PC-3 (cell line): ENCODE measurements at regions of chr22 and their contacts with region 1.

Region 1: DNA sequence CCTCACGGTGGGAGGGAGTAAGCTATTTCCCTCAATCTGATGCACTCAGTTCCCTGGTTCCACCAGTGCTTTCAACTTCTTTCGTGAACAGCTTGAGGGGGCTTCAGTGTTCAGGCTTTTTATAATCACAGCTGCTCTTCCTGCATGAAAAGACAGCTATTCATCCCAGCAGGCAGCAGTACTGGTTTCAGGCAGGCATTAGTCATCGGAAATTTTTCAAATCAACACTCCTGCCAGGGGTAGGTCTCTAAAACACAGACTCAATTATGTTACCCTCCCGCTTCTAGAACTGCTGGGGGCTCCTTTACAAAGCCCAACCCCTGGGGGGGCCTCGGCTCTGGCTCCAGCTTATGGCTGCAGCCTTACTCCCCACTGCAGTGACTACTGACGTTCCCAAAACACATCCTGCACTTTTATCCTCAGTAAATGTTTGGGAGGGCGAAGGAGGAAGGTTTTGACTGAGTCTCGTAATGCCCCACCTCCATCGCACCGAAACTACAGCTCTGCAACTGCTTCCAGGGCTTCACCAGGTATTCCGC is 5.8 kb downstream of the POLDIP3 start:
- DNase-seq: peak; percentile 14
- ATAC-seq: peak; percentile 69
- H3K4me3 ChIP-seq: no peak overlapping the region
- H3K27ac ChIP-seq: no peak overlapping the region
- H3K4me1 ChIP-seq: peaks cover 17% of the 10 kb centered on the region
- H3K27me3 ChIP-seq: no peaks in the 10 kb centered on the region
- CTCF ChIP-seq: no peak

Region 2: GRCh38 chr22:42399315-42400271 is 209.3 kb before region 1 on chr22:
- CTCF ChIA-PET with region 1: no interaction called
- POLR2A ChIA-PET with region 1: no interaction called
- intact Hi-C with region 1: no loop called
- DNase-seq: no peak
- ATAC-seq: no peak
- H3K4me3 ChIP-seq: no peak overlapping the region
- H3K27ac ChIP-seq: no peak overlapping the region
- H3K4me1 ChIP-seq: no peaks in the 10 kb centered on the region
- H3K27me3 ChIP-seq: no peaks in the 10 kb centered on the region
- CTCF ChIP-seq: no peak

Region 3: GRCh38 chr22:42533638-42533977 is 75.3 kb before region 1 on chr22:
- CTCF ChIA-PET with region 1: no interaction called
- POLR2A ChIA-PET with region 1: interaction called, 10 read pairs
- intact Hi-C with region 1: no loop called
- DNase-seq: no peak
- ATAC-seq: no peak
- H3K4me3 ChIP-seq: no peak overlapping the region
- H3K27ac ChIP-seq: no peak overlapping the region
- H3K4me1 ChIP-seq: peaks cover 7% of the 10 kb centered on the region; the same call in 1 of the 2 replicates
- H3K27me3 ChIP-seq: no peaks in the 10 kb centered on the region
- CTCF ChIP-seq: no peak

Region 4: GRCh38 chr22:42711895-42712837 is 103.3 kb after region 1 on chr22:
- CTCF ChIA-PET with region 1: no interaction called
- POLR2A ChIA-PET with region 1: no interaction called
- intact Hi-C with region 1: no loop called
- DNase-seq: no peak
- ATAC-seq: no peak
- H3K4me3 ChIP-seq: no peak overlapping the region
- H3K27ac ChIP-seq: no peak overlapping the region
- H3K4me1 ChIP-seq: no peaks in the 10 kb centered on the region
- H3K27me3 ChIP-seq: no peaks in the 10 kb centered on the region
- CTCF ChIP-seq: no peak

Region 5: GRCh38 chr22:42868751-42869251 is 259.9 kb after region 1 on chr22:
- CTCF ChIA-PET with region 1: no interaction called
- POLR2A ChIA-PET with region 1: no interaction called
- intact Hi-C with region 1: no loop called
- DNase-seq: no peak
- ATAC-seq: no peak
- H3K4me3 ChIP-seq: no peak overlapping the region
- H3K27ac ChIP-seq: no peak overlapping the region
- H3K4me1 ChIP-seq: peaks cover 8% of the 10 kb centered on the region
- H3K27me3 ChIP-seq: no peaks in the 10 kb centered on the region
- CTCF ChIP-seq: no peak

Region 6: DNA sequence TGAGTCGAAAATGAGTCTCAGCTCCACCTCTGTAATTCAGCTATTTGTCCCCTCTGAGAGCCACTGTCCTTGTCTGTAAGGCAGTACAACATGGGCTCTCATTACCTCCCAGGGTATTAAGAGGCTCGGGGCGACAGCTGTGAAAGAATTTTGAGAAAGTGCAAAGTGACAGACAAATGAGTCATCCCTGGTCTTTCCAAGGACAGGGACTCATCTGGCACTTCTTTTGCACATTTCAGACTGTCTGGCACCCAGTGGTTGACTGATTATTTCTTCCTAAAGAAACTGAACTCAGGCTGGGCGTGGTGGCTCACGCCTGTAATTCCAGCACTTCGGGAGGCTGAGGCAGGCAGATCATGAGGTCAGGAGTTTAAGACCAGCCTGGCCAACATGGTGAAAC is 310.3 kb after region 1 on chr22:
- CTCF ChIA-PET with region 1: no interaction called
- POLR2A ChIA-PET with region 1: no interaction called
- intact Hi-C with region 1: no loop called
- DNase-seq: peak; percentile 44
- ATAC-seq: peak; percentile 33
- H3K4me3 ChIP-seq: no peak overlapping the region
- H3K27ac ChIP-seq: no peak overlapping the region
- H3K4me1 ChIP-seq: peaks cover 27% of the 10 kb centered on the region
- H3K27me3 ChIP-seq: no peaks in the 10 kb centered on the region
- CTCF ChIP-seq: no peak